Activated naive CD8-positive, alpha-beta T cell treated with anti-CD3 and anti-CD28 coated beads, Interleukin-2, amount 10 ng/mL, durations not matched to agents 7 days and 5 days (primary cell): ENCODE measurements at regions of chr22 and their contacts with region 1.

Region 1: DNA sequence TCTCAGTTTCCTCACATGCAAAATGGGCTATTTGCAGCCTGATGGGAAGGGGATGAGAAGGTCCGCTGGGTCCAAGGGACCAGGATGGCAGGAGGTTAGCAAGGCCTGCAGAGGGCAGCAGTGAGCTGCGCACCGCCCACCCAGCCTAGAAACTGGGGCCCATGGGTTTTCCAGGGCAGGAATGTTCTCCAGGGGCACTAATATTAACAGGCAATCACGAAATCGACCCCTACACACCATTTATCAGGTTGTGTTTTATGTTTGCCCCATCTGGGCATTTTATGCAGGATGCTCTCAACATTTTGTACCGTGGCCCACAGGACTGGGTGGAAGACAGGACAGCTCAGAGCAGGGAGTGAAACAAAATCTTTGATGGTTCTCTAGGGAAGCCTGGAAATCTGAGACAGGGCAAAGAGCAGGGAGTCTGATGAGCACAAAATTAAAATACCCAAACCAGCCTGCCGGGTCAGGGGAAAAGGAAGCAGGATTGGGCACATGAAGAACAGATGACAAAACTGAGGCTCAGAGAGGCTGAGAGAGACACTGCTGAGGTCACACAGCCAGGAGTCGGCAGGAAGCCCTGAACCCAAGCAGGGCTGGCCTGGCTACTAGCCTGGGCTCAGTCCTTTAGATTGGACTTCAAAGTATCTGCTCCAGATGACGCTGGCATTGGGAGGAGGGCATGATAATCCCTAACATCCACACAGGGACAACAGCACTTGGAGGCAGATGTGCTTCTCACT is 1.6 kb upstream of the BCR start:
- DNase-seq: peak; percentile 75
- ATAC-seq: no peak
- H3K4me3 Mint-ChIP-seq: peak overlapping the region; percentile 6
- H3K27ac Mint-ChIP-seq: peak overlapping the region; percentile 8
- H3K4me1 Mint-ChIP-seq: peaks cover 48% of the 10 kb centered on the region
- H3K27me3 Mint-ChIP-seq: peaks cover 2% of the 10 kb centered on the region

Region 2: DNA sequence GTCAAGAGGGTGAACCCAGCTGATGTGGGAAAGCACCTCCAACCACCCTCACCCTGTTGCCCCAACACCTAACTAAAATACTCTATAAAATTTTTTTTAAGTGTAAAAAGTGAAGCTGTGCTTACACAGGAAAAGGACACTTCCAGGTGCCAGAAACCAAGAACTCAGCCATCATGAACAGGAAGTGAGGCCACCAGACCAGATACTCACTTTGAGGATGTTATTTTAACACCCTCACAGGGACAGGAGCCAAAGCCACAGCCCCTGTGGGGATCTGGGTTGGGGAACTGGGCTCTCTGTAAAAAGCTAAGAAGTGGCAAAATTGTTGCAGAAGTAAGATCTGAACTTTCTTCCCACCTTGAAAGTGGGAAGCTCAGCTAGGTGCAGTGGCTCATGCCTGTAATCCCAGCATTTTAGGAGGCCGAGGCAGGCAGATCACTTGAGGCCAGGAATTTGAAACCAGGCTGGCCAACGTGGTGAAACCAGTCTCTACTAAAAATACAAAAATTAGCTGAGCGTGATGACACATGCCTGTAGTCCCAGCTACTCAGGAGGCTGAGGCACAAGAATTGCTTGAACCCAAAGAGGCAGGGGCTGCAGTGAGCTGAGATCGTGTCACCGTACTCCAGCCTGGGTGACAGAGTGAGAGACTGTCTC is 40.6 kb before region 1 on chr22:
- POLR2A ChIA-PET with region 1: interaction called, 13 read pairs
- DNase-seq: peak; percentile 56
- ATAC-seq: peak; percentile 48
- H3K4me3 Mint-ChIP-seq: peak overlapping the region; percentile 73
- H3K27ac Mint-ChIP-seq: peak overlapping the region; percentile 97
- H3K4me1 Mint-ChIP-seq: peaks cover 40% of the 10 kb centered on the region
- H3K27me3 Mint-ChIP-seq: no peaks in the 10 kb centered on the region

Region 3: DNA sequence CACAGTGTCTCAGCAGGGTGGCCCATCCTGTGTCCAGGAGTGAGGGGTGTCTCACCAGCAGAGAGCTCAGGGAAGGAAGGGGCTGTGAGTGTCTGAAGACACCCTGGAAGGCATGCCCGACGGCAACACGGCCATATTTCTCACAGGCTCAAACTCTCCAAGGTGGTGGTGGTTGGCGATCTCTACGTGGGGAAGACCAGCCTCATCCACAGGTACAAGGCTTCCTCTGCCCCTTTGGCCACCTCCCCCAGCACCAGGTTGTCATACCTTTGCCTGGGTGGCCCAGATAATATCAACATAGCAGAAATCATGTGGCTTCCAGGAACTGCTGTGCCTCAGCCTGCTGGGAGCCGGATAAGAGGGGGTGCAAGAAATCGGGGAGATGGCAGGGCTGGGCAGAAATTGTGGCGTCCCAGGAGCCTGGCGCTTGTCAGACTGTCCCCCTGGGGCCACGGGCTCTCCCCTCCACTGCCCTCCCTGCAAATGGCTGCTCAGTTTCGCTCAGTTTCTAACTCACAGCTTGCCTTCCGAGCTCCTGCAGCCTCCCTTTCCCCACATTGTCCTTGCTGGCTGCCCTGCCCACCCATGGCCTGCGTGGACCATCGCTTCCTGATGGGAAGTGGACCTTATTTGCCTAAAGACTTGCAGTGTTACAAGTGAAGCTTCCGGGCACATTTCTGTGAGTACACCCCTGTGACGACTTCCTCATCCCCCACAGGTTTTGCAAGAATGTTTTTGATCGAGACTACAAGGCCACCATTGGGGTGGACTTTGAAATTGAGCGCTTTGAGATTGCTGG is 26.2 kb before region 1 on chr22:
- POLR2A ChIA-PET with region 1: no interaction called
- DNase-seq: no peak
- ATAC-seq: peak; percentile 38
- H3K4me3 Mint-ChIP-seq: peak overlapping the region; percentile 30
- H3K27ac Mint-ChIP-seq: peak overlapping the region; percentile 77
- H3K4me1 Mint-ChIP-seq: peaks cover 16% of the 10 kb centered on the region
- H3K27me3 Mint-ChIP-seq: no peaks in the 10 kb centered on the region

Region 4: DNA sequence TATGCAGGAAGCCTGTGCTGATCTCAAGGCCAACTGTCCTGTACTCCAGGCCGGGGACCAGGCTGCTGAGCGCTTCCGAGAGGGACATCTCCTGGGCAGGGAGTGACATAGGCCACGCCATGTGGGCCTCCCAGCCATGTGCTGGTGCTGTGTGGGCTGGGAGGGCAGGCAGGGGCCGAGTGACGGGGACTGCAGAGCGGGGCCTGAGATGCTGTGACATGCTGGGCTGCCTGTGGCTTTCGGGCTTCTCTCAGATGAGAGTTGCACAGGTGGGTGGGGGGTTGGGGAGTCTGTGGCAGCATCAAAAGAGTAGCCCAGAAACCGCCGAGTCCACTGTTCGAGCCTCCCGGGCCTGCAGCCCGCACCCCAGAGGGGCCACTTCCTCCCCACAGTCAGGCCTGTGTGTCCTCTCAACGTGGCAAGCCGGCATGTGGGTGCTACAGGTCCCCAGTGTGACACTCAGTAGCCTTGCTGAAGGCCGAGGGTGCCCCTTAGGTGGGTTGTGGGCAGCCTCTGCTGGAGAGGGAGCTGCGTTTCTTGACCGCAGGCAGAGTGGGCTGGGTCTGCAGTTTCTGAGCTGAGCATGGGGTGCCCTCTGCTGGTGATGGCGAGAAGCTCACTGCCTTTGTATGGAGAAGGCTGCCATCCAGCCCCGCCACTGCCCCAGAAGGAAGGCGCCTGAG is 102.9 kb after region 1 on chr22:
- POLR2A ChIA-PET with region 1: interaction called, 11 read pairs
- DNase-seq: peak; percentile 84
- ATAC-seq: peak; percentile 80
- H3K4me3 Mint-ChIP-seq: no peak overlapping the region
- H3K27ac Mint-ChIP-seq: no peak overlapping the region
- H3K4me1 Mint-ChIP-seq: peaks cover 6% of the 10 kb centered on the region
- H3K27me3 Mint-ChIP-seq: no peaks in the 10 kb centered on the region